PC-3 (cell line): ENCODE measurements at regions of chr1 and their contacts with region 1.

Region 1: GRCh38 chr1:185559684-185560331 is 174.4 kb upstream of the HMCN1 start:
- DNase-seq: peak; percentile 53
- ATAC-seq: peak; percentile 76
- H3K4me3 ChIP-seq: no peak overlapping the region
- H3K27ac ChIP-seq: no peak overlapping the region
- H3K4me1 ChIP-seq: peaks cover 19% of the 10 kb centered on the region
- H3K27me3 ChIP-seq: no peaks in the 10 kb centered on the region
- CTCF ChIP-seq: peak; percentile 47

Region 2: GRCh38 chr1:185463011-185463410 is 96.8 kb before region 1 on chr1:
- CTCF ChIA-PET with region 1: no interaction called
- POLR2A ChIA-PET with region 1: no interaction called
- intact Hi-C with region 1: loop called (anchors 10 kb)
- DNase-seq: no peak
- ATAC-seq: no peak
- H3K4me3 ChIP-seq: no peak overlapping the region
- H3K27ac ChIP-seq: no peak overlapping the region
- H3K4me1 ChIP-seq: no peaks in the 10 kb centered on the region
- H3K27me3 ChIP-seq: no peaks in the 10 kb centered on the region
- CTCF ChIP-seq: no peak